Activated CD4-positive, alpha-beta memory T cell treated with anti-CD3 and anti-CD28 coated beads, Interleukin-2, amount 10 ng/mL, durations not matched to agents 7 days and 5 days (primary cell): ENCODE measurements at regions of chr4 and their contacts with region 1.

Region 1: DNA sequence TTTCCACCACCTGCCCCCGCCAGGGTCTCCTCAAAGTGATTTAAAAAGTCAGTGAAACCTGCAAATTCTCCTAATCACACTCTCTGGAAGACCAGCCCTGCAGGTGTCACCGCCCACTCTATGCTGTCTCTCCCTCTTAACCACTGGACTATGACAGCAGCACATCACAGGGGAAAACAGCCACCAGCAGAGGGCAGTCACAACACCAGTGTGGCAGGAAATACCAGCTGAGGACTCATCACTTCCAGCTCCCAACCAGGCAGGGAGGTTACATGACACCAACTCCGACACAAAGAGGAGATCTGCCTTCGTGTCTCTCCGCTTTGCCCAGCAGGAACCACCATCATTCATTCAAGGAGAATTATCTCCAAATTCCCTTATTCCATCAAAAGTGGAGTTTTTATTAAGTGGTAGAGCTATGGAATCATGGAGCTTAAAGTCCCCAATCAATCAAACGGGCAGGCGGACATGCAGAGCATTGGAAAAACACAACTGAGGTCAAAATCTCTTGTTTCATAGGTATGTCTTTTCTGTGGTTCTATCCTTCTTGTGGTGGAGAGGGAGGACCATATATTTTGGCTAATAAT is 91.3 kb downstream of the NSUN7 start:
- DNase-seq: peak; percentile 79
- H3K4me3 Mint-ChIP-seq: no peak overlapping the region
- H3K27ac Mint-ChIP-seq: no peak overlapping the region
- H3K4me1 Mint-ChIP-seq: peaks cover 5% of the 10 kb centered on the region
- H3K27me3 Mint-ChIP-seq: peaks cover 14% of the 10 kb centered on the region

Region 2: DNA sequence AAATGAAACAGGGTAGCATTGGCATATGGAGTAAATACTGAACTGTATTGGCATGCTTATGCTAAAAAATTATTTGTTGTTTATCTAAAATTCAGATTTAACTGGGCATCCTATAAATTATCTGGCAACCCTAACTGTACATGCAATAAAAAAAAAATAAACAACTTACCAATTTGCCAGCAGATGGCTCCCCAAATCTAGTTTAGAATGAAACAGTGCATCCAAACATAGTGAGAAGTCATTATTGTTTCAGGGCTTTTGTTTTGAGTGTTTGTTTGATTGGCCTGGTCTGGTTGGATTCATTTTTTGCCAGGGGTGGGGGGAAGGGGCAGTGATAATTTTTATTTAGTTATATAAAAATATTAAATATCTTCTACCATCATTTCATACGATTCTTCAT is 104.2 kb before region 1 on chr4:
- CTCF ChIA-PET with region 1: interaction called, 21 read pairs
- POLR2A ChIA-PET with region 1: no interaction called
- DNase-seq: no peak
- H3K4me3 Mint-ChIP-seq: no peak overlapping the region
- H3K27ac Mint-ChIP-seq: no peak overlapping the region
- H3K4me1 Mint-ChIP-seq: peaks cover 16% of the 10 kb centered on the region
- H3K27me3 Mint-ChIP-seq: peaks cover 20% of the 10 kb centered on the region

Region 3: GRCh38 chr4:40887288-40888131 is 46.4 kb after region 1 on chr4:
- CTCF ChIA-PET with region 1: no interaction called
- POLR2A ChIA-PET with region 1: no interaction called
- DNase-seq: no peak
- H3K4me3 Mint-ChIP-seq: no peak overlapping the region
- H3K27ac Mint-ChIP-seq: no peak overlapping the region
- H3K4me1 Mint-ChIP-seq: no peaks in the 10 kb centered on the region
- H3K27me3 Mint-ChIP-seq: peaks cover 18% of the 10 kb centered on the region